Sciatic nerve (tissue), 2 donors: ENCODE measurements at regions of chr14 and their contacts with region 1.

Region 1: DNA sequence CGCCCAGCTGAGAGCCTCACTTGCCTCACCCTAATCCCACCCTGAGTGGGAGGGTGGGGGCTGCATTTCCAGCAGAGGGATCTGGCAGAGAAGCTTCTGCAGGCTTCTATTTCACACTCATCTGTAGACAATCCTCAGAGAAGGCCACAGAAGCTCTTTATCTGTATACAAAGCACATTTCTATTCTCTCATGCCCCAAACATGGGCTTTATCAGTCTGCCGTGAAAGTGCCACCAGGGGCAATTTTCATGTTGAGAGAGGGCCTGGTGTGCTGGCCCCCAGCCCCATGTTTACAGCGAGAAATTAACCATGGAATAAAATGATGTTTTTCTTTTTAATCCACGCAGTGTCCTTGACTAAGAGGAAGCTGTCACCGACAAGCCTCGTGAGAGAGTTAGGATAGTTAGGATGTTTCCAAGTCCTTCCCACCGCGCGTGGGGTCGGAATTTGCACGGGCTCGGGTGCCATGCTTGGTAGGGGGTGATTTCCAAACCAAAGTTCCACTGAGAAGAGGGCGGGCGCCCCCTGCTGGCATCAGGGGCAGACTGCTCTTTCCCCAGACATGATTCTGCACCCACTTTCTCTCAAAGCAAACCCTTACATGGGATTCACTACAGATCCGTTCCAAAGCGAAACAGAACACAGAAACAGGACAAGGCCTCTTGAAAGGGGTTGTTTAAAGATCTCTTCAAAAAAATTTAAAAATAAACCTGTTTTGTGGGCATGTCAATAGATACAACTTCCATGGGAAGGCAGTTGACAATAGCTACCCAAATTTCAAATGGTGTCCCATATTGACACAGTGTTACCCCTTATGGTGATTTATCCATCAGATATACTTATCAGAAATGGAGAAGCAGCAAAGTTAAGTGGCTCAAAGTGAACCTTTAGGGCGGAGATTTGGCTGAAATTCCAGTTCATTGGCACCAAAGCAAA is 19.4 kb downstream of the BDKRB1 start:
- DNase-seq: peak; percentile 90
- ATAC-seq: peak; percentile 88

Region 2: DNA sequence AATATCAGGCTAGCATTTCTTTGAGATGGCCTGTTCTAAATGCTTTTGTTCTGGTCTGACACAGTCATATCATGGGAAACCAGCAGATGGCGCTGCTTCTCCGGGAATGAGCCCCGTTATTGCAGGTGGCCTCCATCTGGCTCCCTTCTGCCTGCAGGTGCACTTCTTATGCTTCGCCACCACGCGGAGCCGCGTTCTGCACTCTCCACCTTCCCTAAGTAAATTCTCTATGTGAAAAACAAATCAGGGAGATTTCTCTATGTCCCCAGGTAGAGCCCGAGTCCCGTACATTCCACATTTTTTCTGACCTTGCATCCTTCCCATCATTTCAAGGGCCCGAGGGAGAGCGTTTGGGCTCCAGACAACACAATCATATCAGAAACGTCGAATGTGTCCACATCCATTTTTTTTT is 714.4 kb before region 1 on chr14:
- intact Hi-C with region 1: loop called (anchors 10 kb)
- DNase-seq: peak; percentile 91
- ATAC-seq: peak; percentile 85

Region 3: DNA sequence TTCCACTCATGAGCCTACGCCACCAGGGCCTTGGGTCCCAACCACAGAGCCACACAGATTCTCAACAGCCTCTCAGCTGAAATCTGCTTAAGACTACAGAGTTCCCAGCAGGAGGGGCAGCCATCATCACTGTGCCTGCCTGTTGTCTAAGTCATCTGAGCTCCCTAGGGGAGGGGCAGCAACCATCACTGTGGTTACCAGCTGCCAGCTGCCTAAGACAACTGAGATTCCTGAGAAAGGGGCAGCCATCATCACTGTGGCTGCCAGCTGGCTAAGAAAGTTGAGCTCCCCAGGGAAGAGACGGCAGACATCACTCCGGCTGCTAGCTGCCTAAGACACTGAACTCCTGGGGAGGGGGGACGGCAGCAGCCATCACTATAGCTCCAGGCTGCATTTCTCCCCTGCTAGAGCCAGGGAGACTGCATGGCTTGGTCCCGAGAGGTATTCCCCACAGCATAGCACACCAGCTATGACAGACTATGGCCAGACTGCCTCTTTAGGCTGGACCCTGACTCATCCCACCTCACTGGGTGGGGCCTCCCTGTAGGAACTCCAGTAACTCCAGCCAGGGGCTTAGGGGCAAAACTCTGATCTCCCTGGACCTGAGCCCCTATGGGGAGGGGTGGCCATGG is 273.5 kb before region 1 on chr14:
- intact Hi-C with region 1: loop called (anchors 10 kb)
- DNase-seq: no peak
- ATAC-seq: no peak

Region 4: GRCh38 chr14:96100161-96101029 is 175.1 kb before region 1 on chr14:
- intact Hi-C with region 1: loop called (anchors 5 kb)
- DNase-seq: peak; percentile 92
- ATAC-seq: peak; percentile 69